ENCODE measurements at regions of chr12 and their contacts with region 1.

Region 1: DNA sequence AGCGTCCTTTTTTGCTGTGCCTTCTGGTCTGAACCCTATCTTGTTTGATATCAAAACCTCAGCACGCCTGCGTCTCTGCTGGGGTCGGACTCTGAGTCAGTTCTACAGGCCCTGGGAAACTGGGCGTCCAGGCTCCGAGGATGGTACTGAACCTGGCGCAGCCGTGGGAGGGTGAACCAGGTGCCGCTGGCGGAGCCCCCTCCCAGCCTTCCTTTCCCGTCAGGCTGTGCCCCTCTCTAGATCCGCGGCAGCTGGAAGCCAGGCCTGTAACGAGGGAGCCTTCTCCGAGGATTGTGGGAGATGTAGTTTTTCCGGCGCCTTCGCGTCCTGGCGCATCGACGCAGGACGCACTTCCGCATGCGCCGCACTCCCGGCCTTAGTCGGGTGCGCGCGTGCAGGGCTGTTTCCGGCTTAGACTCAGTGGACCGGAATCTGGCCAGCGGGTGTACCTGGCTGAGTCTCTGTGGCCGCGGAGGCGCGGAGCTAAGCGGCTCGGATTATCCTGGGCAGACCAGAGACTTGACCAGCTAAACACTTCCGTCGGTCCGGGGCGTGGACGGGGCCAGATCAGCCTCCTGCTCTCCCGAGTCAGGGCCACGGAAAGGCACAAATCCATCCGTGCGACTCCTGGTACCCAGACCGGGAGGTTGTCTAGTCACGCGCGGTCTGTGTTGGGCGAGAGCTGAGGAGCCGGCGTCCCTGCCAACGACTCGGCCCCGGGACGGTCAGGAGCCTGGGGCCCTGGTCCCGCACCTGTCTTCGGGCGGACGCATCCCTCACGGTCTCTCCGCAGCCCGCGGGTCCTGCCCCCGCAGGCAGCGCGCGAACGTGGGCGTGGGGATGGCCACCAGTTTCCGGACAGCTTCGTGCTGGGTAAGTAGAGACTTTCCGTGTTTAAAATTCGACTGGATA is at the start of gene ZNF26:
- DNase-seq: peak; percentile 92 to 95 (median 93)
- ATAC-seq: peak; percentile 99 to 100 (median 100)
- H3K4me3 ChIP-seq: peak within 1 kb of the TSS; percentile 62 to 97 (median 82)
- H3K27ac ChIP-seq: peak within 1 kb of the TSS; percentile 53 to 91 (median 84)
- H3K4me1 ChIP-seq: peaks cover 6 to 18% (median 12%) of the 10 kb centered on the region in 12 donors
- H3K27me3 ChIP-seq: no peaks in the 10 kb centered on the region
- CTCF ChIP-seq: no peak
- POLR2A ChIP-seq: peak in 1 of 2 donors; percentile 71
- total RNA-seq, gene ZNF26: 0.60 to 6.7 (median 3.7) TPM

Region 2: GRCh38 chr12:133037207-133038005 is 51.1 kb after region 1 on chr12 and contains the start of gene ZNF84:
- intact Hi-C with region 1: loop called in 7 of 10 experiments (anchors 2 to 10 kb)
- DNase-seq: peak; percentile 96 to 98 (median 98)
- ATAC-seq: peak; percentile 99 to 100 (median 99)
- H3K4me3 ChIP-seq: peak within 1 kb of the TSS; percentile 60 to 86 (median 78)
- H3K27ac ChIP-seq: peak within 1 kb of the TSS; percentile 79 to 97 (median 92)
- H3K4me1 ChIP-seq: peaks cover 0 to 21% (median 7%) of the 10 kb centered on the region in 12 donors
- H3K27me3 ChIP-seq: no peaks in the 10 kb centered on the region
- CTCF ChIP-seq: no peak
- POLR2A ChIP-seq: peak in 1 of 2 donors; percentile 57
- total RNA-seq, gene ZNF84: 11.0 to 24.0 (median 15.9) TPM